AG04449 (cell line): ENCODE measurements at regions of chr19 and their contacts with region 1.

Region 1: GRCh38 chr19:43446746-43447489 is 18.5 kb downstream of the LYPD3 start:
- DNase-seq: no peak
- H3K4me3 ChIP-seq: no peak overlapping the region
- CTCF ChIP-seq: peak; percentile 90

Region 2: GRCh38 chr19:43229315-43229714 is 217.6 kb before region 1 on chr19:
- CTCF ChIA-PET with region 1: no interaction called
- POLR2A ChIA-PET with region 1: no interaction called
- DNase-seq: peak; percentile 4
- H3K4me3 ChIP-seq: no peak overlapping the region
- CTCF ChIP-seq: peak; percentile 5

Region 3: DNA sequence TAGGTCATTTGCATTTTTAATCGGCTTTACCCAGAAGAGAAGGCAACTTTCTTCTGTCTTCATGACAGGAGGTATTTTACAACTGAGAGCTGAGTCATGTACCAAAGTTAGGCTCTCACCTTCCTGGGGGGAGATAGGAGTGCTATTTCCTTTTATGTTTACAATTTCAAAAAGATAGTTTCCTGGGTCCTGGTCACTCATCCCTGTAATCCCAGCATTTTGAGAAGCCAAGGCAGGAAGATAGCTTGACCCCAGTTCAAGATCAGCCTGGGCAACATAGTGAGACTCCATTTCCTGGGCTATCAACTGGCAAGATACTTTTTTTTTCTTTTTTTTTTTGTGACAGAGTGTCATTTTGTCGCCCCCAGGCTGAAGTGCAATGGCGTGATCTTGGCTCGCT is 10.9 kb after region 1 on chr19:
- CTCF ChIA-PET with region 1: interaction called, 69 read pairs
- POLR2A ChIA-PET with region 1: no interaction called
- DNase-seq: no peak
- H3K4me3 ChIP-seq: no peak overlapping the region
- CTCF ChIP-seq: no peak

Region 4: GRCh38 chr19:43474986-43475705 is 28.2 kb after region 1 on chr19:
- CTCF ChIA-PET with region 1: interaction called, 16 read pairs
- POLR2A ChIA-PET with region 1: no interaction called
- DNase-seq: peak; percentile 53
- H3K4me3 ChIP-seq: peak overlapping the region; percentile 45
- CTCF ChIP-seq: no peak

Region 5: GRCh38 chr19:43503501-43504425 is 56.8 kb after region 1 on chr19:
- CTCF ChIA-PET with region 1: interaction called, 95 read pairs
- POLR2A ChIA-PET with region 1: no interaction called
- DNase-seq: peak; percentile 29
- H3K4me3 ChIP-seq: peak overlapping the region; percentile 85
- CTCF ChIP-seq: no peak

Region 6: GRCh38 chr19:43532962-43533545 is 86.1 kb after region 1 on chr19 and contains the start of gene ZNF575:
- CTCF ChIA-PET with region 1: interaction called, 609 read pairs
- POLR2A ChIA-PET with region 1: no interaction called
- DNase-seq: peak; percentile 79
- H3K4me3 ChIP-seq: peak within 1 kb of the TSS; percentile 66
- CTCF ChIP-seq: no peak

Region 7: DNA sequence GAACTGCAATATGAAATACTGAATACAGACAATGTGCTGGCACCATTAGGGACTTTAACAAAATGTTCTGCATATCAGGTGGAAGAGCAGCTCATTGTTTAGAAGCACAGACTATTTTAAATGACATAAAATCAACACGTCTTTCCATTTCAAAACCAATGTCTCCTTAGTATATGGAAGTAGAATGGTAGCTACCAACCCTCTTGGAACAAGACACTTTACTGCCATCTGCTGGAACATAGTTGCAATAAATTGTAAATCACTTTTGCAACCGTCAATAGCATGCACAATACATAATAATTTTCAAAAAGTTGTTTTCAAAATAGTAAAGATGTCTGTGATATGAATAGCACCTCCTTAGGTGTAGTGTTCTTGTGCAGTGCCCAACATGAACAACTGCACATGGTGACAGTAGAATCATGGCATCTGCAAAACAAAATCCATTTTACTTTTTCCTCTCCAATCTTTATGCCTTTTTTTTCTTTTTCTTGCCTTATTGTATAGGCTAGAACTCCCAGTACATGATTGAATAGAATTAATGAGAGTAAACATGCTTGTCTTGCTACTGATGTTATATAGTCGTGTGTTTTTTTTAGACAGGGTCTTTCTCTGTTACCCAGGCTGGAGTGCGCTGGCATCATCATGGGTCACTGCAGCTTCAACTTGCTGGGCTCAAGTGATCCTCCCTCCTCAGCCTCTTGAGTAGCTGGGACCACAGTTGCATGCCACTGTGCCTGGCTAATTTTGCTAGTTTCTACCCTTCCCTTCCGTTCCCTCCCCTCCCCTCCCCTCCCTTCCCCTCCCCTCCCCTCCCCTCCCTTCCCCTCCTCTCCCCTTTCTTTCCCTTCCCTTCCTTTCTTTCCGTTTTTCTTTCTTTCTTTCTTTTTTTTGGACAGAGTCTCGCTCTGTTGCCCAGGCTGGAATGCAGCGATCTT is 363.1 kb after region 1 on chr19:
- CTCF ChIA-PET with region 1: interaction called, 15 read pairs
- POLR2A ChIA-PET with region 1: no interaction called
- DNase-seq: peak; percentile 17
- H3K4me3 ChIP-seq: no peak overlapping the region
- CTCF ChIP-seq: peak; percentile 52